Activated naive CD8-positive, alpha-beta T cell treated with anti-CD3 and anti-CD28 coated beads, Interleukin-2, amount 10 ng/mL, durations not matched to agents 7 days and 5 days (primary cell): ENCODE measurements at regions of chr2 and their contacts with region 1.

Region 1: GRCh38 chr2:20350753-20351554 is at the start of gene PUM2:
- DNase-seq: peak; percentile 98
- ATAC-seq: peak; percentile 85
- H3K4me3 Mint-ChIP-seq: peak within 1 kb of the TSS; percentile 93
- H3K27ac Mint-ChIP-seq: peak within 1 kb of the TSS; percentile 88
- H3K4me1 Mint-ChIP-seq: peaks cover 30% of the 10 kb centered on the region
- H3K27me3 Mint-ChIP-seq: no peaks in the 10 kb centered on the region
- total RNA-seq, gene PUM2: 133 to 134 TPM

Region 2: DNA sequence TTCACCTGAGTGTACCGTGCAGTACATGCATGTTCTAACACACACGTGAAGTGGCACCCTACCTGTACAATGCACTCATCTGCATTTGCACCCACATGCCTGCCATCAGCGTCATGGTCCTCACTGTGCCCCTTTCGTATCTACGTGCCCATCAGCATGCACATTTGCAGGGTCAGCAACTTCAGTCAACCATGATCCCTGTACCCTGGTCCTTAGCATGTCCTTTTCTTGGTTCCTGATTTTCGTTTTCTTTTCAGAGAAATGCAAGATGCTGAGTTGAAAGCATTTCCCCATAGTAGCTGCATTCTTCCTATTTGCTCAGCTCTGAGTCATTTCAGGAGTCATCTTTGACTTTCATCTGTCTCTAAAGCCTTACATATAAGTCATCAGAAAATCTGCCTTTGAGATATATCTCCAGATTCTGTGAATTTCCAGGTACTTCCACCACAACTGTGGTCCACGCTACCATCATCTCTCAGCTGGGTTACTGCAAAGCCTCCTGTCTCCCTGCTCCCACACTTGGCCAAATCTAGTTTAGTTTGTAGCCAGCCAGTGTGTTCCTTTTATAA is 14.4 kb after region 1 on chr2:
- POLR2A ChIA-PET with region 1: interaction called, 23 read pairs
- DNase-seq: peak; percentile 47
- ATAC-seq: peak; percentile 93
- H3K4me3 Mint-ChIP-seq: peak overlapping the region; percentile 47
- H3K27ac Mint-ChIP-seq: peak overlapping the region; percentile 64
- H3K4me1 Mint-ChIP-seq: peaks cover 28% of the 10 kb centered on the region
- H3K27me3 Mint-ChIP-seq: peaks cover 4% of the 10 kb centered on the region